ENCODE measurements at regions of chr10 and their contacts with region 1.

Region 1: DNA sequence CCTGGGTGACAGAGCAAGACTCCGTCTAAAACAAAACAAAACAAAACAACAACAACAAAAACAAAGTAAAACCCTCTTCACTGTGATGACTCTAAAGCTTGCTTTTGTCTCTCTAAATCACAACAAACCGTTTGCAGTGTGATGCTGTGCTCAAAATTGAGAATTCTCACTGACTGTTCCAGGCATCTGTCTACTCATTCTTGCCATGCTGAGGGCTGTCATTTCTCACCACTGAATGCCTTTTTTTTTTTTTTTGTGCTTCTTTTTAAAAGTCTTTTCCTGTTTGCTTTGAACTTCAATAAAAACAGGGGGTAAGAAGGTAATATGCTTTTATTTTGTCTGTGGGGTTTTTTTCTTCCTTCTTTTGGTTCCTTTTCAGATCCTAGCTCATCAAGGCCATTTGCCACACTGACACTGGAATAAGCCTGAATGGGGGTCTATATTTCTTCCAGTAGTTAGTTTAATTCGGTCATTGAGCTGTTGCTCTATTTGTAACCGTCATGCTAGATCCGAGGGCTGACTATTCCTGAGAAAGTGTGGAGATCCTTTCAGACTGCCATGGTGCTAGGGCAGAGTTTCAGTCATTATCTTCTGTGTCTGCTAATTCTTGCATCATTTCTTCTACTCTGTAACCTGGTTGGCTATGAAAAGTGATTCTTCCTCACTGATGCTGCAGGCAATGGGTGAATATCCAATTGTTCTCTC is 10.6 kb downstream of the FAS start:
- DNase-seq: no peak
- H3K4me3 ChIP-seq: no peak overlapping the region
- H3K27ac ChIP-seq: peak overlapping the region; percentile 96
- H3K4me1 ChIP-seq: peaks cover 16% of the 10 kb centered on the region
- H3K27me3 ChIP-seq: no peaks in the 10 kb centered on the region
- CTCF ChIP-seq: no peak

Region 2: DNA sequence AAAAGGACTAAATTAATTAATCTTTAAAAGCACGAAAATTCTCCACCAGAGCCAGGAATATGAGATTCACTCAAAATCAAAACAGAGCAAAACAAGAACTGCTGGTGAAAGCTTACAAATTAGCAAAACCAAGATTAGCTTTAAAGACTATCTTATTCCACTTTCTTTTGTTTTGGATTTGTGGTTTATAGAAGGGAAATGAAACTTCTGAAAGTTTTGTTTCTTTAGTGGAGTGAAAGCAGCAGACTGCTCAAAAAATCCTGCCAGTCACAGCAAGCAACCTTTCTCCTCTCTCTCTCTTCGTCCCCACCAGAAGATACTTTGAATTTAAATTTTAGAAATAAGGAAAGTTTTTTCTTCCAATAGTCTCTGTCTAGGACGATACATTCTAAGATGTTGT is 56.4 kb before region 1 on chr10:
- CTCF ChIA-PET with region 1: no interaction called
- dilution Hi-C with region 1: loop called (anchors 10 kb)
- in situ Hi-C with region 1: no loop called
- intact Hi-C with region 1: no loop called
- DNase-seq: no peak
- H3K4me3 ChIP-seq: no peak overlapping the region
- H3K27ac ChIP-seq: no peak overlapping the region
- H3K4me1 ChIP-seq: no peaks in the 10 kb centered on the region
- H3K27me3 ChIP-seq: no peaks in the 10 kb centered on the region
- CTCF ChIP-seq: no peak

Region 3: GRCh38 chr10:88979153-88979562 is 22.0 kb before region 1 on chr10:
- CTCF ChIA-PET with region 1: no interaction called
- dilution Hi-C with region 1: no loop called
- in situ Hi-C with region 1: no loop called
- intact Hi-C with region 1: no loop called
- DNase-seq: peak; percentile 82
- H3K4me3 ChIP-seq: no peak overlapping the region
- H3K27ac ChIP-seq: no peak overlapping the region
- H3K4me1 ChIP-seq: peaks cover 17% of the 10 kb centered on the region
- H3K27me3 ChIP-seq: no peaks in the 10 kb centered on the region
- CTCF ChIP-seq: no peak

Region 4: GRCh38 chr10:89053555-89053954 is 52.4 kb after region 1 on chr10:
- CTCF ChIA-PET with region 1: interaction called, 13 read pairs
- dilution Hi-C with region 1: no loop called
- in situ Hi-C with region 1: no loop called
- intact Hi-C with region 1: no loop called
- DNase-seq: no peak
- H3K4me3 ChIP-seq: no peak overlapping the region
- H3K27ac ChIP-seq: no peak overlapping the region
- H3K4me1 ChIP-seq: no peaks in the 10 kb centered on the region
- H3K27me3 ChIP-seq: no peaks in the 10 kb centered on the region
- CTCF ChIP-seq: no peak

Measured in mammary epithelial cell (primary cell).